ENCODE measurements at regions of chr4 and their contacts with region 1.

Region 1: DNA sequence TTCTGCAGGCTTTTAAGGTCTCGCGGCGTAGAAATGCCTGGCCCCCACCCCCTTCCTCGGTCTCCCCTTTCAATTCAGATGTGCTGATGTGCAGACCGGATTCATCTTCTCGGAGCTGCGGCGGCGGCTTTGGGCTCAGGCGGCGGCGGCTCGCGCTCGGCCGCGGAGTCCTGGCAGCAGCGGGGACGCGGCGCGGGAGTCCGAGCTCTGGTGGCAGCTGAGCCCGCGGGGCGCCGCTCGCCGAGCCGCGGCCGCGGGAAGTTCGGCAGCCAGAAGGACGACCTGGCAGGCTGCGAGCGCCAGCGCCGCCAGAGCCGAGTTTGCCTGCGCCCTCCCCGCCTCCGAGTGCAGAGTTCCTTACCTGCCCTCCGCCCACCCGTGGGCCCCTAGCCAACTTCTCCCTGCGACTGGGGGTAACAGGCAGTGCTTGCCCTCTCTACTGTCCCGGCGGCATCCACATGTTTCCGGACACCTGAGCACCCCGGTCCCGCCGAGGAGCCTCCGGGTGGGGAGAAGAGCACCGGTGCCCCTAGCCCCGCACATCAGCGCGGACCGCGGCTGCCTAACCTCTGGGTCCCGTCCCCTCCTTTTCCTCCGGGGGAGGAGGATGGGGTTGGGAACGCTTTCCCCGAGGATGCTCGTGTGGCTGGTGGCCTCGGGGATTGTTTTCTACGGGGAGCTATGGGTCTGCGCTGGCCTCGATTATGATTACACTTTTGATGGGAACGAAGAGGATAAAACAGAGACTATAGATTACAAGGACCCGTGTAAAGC is 448 bp downstream of the TLL1 start:
- DNase-seq: peak; percentile 44
- ATAC-seq: peak; percentile 34
- H3K4me3 ChIP-seq: peak overlapping the region; percentile 89
- H3K27ac ChIP-seq: peak overlapping the region; percentile 28; the same call in 1 of the 2 replicates
- H3K4me1 ChIP-seq: peaks cover 29% of the 10 kb centered on the region
- H3K27me3 ChIP-seq: no peaks in the 10 kb centered on the region
- CTCF ChIP-seq: no peak

Region 2: GRCh38 chr4:165684177-165684805 is 189.2 kb before region 1 on chr4:
- CTCF ChIA-PET with region 1: no interaction called
- POLR2A ChIA-PET with region 1: no interaction called
- intact Hi-C with region 1: loop called (anchors 2 kb)
- DNase-seq: peak; percentile 90
- ATAC-seq: peak; percentile 67
- H3K4me3 ChIP-seq: peak overlapping the region; percentile 36; the same call in 1 of the 2 replicates
- H3K27ac ChIP-seq: peak overlapping the region; percentile 71
- H3K4me1 ChIP-seq: peaks cover 64% of the 10 kb centered on the region
- H3K27me3 ChIP-seq: no peaks in the 10 kb centered on the region
- CTCF ChIP-seq: no peak

Region 3: DNA sequence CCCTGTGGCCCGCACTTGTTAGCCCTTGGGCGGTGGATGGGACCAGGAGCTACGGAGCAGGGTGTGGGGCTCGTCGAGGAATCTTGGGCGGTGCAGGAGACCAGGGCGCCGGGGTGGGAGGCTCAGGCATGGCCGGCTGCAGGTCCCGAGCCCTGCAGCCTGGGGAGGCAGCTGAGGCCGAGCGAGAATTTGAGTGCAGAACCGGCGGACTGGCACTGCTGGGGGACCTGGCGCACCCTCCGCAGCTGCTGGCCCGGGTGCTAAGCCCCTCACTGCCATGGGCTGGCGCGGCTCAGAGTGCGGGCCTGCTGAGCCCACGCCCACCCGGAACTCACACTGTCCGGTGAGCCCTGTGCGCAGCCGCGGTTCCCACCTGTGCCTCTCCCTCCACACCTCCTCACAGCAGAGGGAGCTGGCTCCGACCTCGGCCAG is 74.1 kb before region 1 on chr4:
- CTCF ChIA-PET with region 1: no interaction called
- POLR2A ChIA-PET with region 1: no interaction called
- intact Hi-C with region 1: no loop called
- DNase-seq: no peak
- ATAC-seq: no peak
- H3K4me3 ChIP-seq: no peak overlapping the region
- H3K27ac ChIP-seq: no peak overlapping the region
- H3K4me1 ChIP-seq: no peaks in the 10 kb centered on the region
- H3K27me3 ChIP-seq: no peaks in the 10 kb centered on the region
- CTCF ChIP-seq: no peak

Region 4: GRCh38 chr4:165814256-165815010 is 59.1 kb before region 1 on chr4:
- CTCF ChIA-PET with region 1: no interaction called
- POLR2A ChIA-PET with region 1: no interaction called
- intact Hi-C with region 1: no loop called
- DNase-seq: peak; percentile 7
- ATAC-seq: no peak
- H3K4me3 ChIP-seq: no peak overlapping the region
- H3K27ac ChIP-seq: no peak overlapping the region
- H3K4me1 ChIP-seq: no peaks in the 10 kb centered on the region
- H3K27me3 ChIP-seq: no peaks in the 10 kb centered on the region
- CTCF ChIP-seq: no peak

Region 5: GRCh38 chr4:166012129-166013078 is 138.9 kb after region 1 on chr4:
- CTCF ChIA-PET with region 1: no interaction called
- POLR2A ChIA-PET with region 1: no interaction called
- intact Hi-C with region 1: loop called (anchors 2 kb)
- DNase-seq: peak; percentile 71
- ATAC-seq: peak; percentile 73
- H3K4me3 ChIP-seq: peak overlapping the region; percentile 48
- H3K27ac ChIP-seq: peak overlapping the region; percentile 91
- H3K4me1 ChIP-seq: peaks cover 44% of the 10 kb centered on the region
- H3K27me3 ChIP-seq: no peaks in the 10 kb centered on the region
- CTCF ChIP-seq: no peak

Region 6: DNA sequence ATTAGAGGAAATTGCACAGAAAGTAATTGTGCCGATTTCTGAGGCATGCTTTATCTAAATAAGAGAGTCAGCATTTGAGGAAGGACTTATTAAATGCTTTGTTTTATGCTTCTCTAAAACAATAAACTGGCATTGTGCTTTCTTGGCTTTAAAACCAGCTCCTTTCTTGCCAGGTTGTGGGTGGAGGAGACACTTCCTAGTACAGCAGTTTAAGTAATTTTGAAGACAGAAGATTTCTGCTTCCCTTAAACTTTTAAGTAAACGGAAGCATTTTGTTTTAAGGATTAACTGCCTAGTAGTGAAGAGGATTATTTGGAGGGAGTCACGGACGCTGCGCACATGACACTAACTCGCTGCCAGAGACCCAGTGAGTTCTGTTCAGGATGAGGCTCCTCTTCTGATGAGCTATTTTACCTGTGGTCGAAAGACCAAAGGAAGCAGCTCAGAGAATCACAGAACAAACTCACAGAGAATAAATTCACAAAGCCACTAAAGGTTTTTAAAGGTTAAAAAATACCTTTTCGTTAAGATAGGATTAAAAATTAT is 169.1 kb after region 1 on chr4:
- CTCF ChIA-PET with region 1: no interaction called
- POLR2A ChIA-PET with region 1: no interaction called
- intact Hi-C with region 1: loop called (anchors 1 kb)
- DNase-seq: peak; percentile 11
- ATAC-seq: peak; percentile 75
- H3K4me3 ChIP-seq: peak overlapping the region; percentile 63
- H3K27ac ChIP-seq: peak overlapping the region; percentile 27; the same call in 1 of the 2 replicates
- H3K4me1 ChIP-seq: peaks cover 33% of the 10 kb centered on the region
- H3K27me3 ChIP-seq: no peaks in the 10 kb centered on the region
- CTCF ChIP-seq: no peak

Region 7: DNA sequence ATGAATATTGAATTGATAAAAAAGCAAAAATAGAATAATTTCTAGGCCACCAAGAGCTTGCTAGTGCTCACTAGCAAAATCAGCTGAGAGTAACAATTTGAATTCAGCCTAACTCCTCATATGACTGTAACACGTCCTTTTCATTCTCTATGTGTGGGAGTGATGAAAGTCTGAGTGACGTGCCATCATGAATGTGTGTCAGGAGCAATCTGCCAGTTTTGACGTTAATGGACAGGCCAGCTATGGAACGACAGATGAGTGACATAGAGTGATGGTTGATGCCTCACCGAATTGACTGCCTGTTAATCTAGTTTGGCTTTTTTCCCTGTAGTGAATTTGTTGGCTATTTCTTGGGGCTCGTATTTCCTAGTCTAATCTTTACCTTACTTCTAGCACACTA is 200.3 kb after region 1 on chr4:
- CTCF ChIA-PET with region 1: no interaction called
- POLR2A ChIA-PET with region 1: no interaction called
- intact Hi-C with region 1: loop called (anchors 2 kb)
- DNase-seq: no peak
- ATAC-seq: no peak
- H3K4me3 ChIP-seq: no peak overlapping the region
- H3K27ac ChIP-seq: no peak overlapping the region
- H3K4me1 ChIP-seq: peaks cover 31% of the 10 kb centered on the region
- H3K27me3 ChIP-seq: no peaks in the 10 kb centered on the region
- CTCF ChIP-seq: no peak

Region 8: DNA sequence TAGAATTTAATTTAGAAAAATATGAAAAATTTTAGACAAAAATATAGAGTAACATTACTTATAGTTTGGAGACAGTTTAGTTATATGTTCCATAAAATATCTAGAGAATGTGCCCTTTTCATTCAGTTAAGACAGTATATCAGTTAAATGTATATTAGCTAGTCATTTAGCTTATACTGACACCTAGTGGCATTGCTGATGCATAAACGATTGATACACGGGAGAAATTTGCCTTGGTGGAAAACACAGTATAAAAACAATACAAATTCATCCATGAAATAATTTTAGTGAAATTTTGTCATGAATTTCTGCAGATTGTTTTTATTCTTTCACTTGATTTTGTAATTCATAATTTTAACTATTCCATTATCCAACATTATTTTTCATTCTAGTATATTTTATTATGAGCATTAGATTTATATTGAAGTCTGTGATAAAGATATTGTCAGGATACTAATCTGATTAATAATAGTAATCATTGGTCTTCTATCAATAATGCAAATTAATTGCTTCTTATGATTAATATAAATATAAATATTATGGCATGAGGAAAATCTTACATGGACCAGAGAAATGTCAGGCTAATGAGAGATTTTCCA is 218.5 kb after region 1 on chr4:
- CTCF ChIA-PET with region 1: no interaction called
- POLR2A ChIA-PET with region 1: no interaction called
- intact Hi-C with region 1: loop called (anchors 5 kb)
- DNase-seq: peak; percentile 64
- ATAC-seq: peak; percentile 33; the same call in 1 of the 2 replicates
- H3K4me3 ChIP-seq: no peak overlapping the region
- H3K27ac ChIP-seq: no peak overlapping the region
- H3K4me1 ChIP-seq: peaks cover 4% of the 10 kb centered on the region
- H3K27me3 ChIP-seq: no peaks in the 10 kb centered on the region
- CTCF ChIP-seq: peak; percentile 71